Activated naive CD4-positive, alpha-beta T cell treated with anti-CD3 and anti-CD28 coated beads for 36 hours (primary cell): ENCODE measurements at regions of chr12 and their contacts with region 1.

Region 1: DNA sequence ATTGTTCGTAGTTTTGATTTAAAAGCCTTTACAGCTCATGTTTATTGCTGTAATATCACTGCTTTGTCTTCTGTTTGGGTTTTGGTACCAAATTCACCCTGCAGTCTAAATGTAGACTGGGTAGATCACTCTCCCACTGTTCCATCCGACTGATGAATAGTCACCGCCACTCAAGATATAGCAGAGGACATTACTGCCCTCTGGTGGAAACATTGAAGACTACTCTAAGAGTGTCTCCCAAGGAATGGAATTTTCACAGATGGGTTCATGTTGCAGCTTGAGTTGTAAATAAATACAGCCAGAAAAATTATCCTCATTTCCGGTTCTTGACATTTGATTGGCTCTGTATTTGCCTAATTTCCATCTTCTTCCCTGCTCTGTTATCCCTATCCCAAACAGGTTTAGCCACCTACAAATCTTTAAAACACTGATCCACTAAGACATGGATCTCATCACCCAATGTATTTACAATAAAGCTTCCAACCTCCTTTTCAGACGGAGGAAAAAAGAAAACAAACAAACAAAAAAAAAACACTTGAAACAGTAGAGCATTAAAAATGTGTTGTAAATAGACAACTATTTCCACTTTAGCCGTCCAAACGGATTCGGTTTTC is 198.3 kb upstream of the CPNE8 start:
- DNase-seq: peak; percentile 7
- H3K4me3 Mint-ChIP-seq: no peak overlapping the region
- H3K27ac Mint-ChIP-seq: no peak overlapping the region
- H3K4me1 Mint-ChIP-seq: no peaks in the 10 kb centered on the region
- H3K27me3 Mint-ChIP-seq: no peaks in the 10 kb centered on the region

Region 2: GRCh38 chr12:38138225-38139221 is 965.1 kb before region 1 on chr12:
- CTCF ChIA-PET with region 1: interaction called, 3 read pairs
- intact Hi-C with region 1: loop called (anchors 1 kb)
- DNase-seq: peak; percentile 73
- H3K4me3 Mint-ChIP-seq: peak overlapping the region; percentile 61
- H3K27ac Mint-ChIP-seq: no peak overlapping the region
- H3K4me1 Mint-ChIP-seq: peaks cover 3% of the 10 kb centered on the region
- H3K27me3 Mint-ChIP-seq: peaks cover 6% of the 10 kb centered on the region

Region 3: GRCh38 chr12:38327356-38327755 is 776.3 kb before region 1 on chr12:
- CTCF ChIA-PET with region 1: interaction called, 10 read pairs
- intact Hi-C with region 1: loop called (anchors 1 kb)
- DNase-seq: no peak
- H3K4me3 Mint-ChIP-seq: no peak overlapping the region
- H3K27ac Mint-ChIP-seq: no peak overlapping the region
- H3K4me1 Mint-ChIP-seq: no peaks in the 10 kb centered on the region
- H3K27me3 Mint-ChIP-seq: no peaks in the 10 kb centered on the region

Region 4: DNA sequence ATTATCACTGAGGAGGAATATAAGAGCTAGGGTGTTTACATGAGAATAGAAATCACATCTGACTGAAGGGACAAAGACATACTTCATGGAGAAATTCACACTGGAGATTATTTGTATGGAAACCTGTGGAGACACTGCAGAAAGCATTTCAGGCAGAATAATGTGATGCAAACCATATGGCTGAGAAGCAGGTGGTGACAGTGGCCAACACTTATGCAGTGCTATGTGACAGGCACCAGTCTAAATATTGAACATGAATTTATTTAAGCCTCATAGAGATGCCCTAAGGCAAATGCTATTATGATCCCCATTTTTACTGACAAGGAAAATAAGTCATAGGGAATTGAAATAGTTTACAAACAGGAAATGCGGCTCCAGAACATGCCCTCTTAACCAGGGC is 770.8 kb before region 1 on chr12:
- CTCF ChIA-PET with region 1: interaction called, 10 read pairs
- intact Hi-C with region 1: loop called (anchors 1 kb)
- DNase-seq: no peak
- H3K4me3 Mint-ChIP-seq: no peak overlapping the region
- H3K27ac Mint-ChIP-seq: no peak overlapping the region
- H3K4me1 Mint-ChIP-seq: no peaks in the 10 kb centered on the region
- H3K27me3 Mint-ChIP-seq: no peaks in the 10 kb centered on the region

Region 5: DNA sequence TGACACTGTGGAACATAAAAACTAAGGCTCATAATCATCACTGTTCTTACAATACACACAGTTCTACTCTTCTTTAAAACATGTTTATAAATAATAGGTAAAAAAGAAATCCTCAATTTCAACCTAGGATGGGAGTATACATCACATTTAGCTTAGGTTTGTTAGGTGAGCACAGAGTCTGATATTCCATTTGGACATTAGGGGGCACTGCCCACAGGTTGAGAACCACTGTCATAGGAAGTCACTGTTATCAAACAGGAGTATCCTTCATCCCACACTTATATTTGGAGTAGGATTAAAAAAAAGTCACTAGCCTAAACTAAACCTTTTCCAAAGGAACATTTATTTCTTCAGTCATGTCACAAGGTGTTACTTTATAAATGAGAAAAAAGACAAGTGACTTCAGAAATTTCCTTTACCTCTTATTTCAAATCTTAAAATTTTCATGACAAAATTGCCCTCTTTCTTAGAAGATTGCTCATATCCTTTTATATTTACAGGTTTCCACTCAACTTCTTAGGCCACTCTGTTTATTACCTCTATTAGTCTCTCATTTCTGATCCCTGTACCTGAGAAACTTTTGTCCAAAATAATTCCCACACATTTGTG is 438.9 kb before region 1 on chr12:
- CTCF ChIA-PET with region 1: no interaction called
- intact Hi-C with region 1: loop called (anchors 2 kb)
- DNase-seq: no peak
- H3K4me3 Mint-ChIP-seq: no peak overlapping the region
- H3K27ac Mint-ChIP-seq: no peak overlapping the region
- H3K4me1 Mint-ChIP-seq: no peaks in the 10 kb centered on the region
- H3K27me3 Mint-ChIP-seq: no peaks in the 10 kb centered on the region

Region 6: DNA sequence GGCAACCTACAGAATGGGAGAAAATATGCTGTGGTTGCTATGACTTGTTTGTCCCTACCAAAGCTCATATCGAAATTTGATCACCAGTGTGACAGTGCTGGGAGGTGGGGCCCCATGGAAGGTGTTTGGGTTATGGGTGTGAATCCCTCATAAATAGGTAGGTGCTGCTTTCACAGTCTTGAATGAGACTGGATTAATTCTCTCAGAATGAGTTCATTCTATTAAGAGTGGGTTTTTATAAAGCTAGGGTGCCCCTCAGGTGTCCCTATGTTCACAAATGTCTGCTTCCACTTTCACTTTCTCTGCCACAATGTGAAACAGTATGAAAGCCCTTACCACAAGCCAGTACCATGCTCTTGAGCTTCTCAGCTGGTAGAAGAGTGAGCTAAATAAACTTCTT is 331.8 kb before region 1 on chr12:
- CTCF ChIA-PET with region 1: no interaction called
- intact Hi-C with region 1: no loop called
- DNase-seq: peak; percentile 34
- H3K4me3 Mint-ChIP-seq: no peak overlapping the region
- H3K27ac Mint-ChIP-seq: no peak overlapping the region
- H3K4me1 Mint-ChIP-seq: peaks cover 6% of the 10 kb centered on the region
- H3K27me3 Mint-ChIP-seq: no peaks in the 10 kb centered on the region

Region 7: GRCh38 chr12:38906482-38907170 is 197.0 kb before region 1 on chr12:
- CTCF ChIA-PET with region 1: no interaction called
- intact Hi-C with region 1: loop called (anchors 1 kb)
- DNase-seq: peak; percentile 76
- H3K4me3 Mint-ChIP-seq: peak overlapping the region; percentile 83
- H3K27ac Mint-ChIP-seq: peak overlapping the region; percentile 86
- H3K4me1 Mint-ChIP-seq: peaks cover 22% of the 10 kb centered on the region
- H3K27me3 Mint-ChIP-seq: peaks cover 31% of the 10 kb centered on the region

Region 8: GRCh38 chr12:38921025-38921677 is 182.5 kb before region 1 on chr12:
- CTCF ChIA-PET with region 1: interaction called, 7 read pairs
- intact Hi-C with region 1: loop called (anchors 1 kb)
- DNase-seq: peak; percentile 60
- H3K4me3 Mint-ChIP-seq: no peak overlapping the region
- H3K27ac Mint-ChIP-seq: no peak overlapping the region
- H3K4me1 Mint-ChIP-seq: no peaks in the 10 kb centered on the region
- H3K27me3 Mint-ChIP-seq: no peaks in the 10 kb centered on the region